OCI-LY7 (cell line): ENCODE measurements at regions of chr6 and their contacts with region 1.

Region 1: DNA sequence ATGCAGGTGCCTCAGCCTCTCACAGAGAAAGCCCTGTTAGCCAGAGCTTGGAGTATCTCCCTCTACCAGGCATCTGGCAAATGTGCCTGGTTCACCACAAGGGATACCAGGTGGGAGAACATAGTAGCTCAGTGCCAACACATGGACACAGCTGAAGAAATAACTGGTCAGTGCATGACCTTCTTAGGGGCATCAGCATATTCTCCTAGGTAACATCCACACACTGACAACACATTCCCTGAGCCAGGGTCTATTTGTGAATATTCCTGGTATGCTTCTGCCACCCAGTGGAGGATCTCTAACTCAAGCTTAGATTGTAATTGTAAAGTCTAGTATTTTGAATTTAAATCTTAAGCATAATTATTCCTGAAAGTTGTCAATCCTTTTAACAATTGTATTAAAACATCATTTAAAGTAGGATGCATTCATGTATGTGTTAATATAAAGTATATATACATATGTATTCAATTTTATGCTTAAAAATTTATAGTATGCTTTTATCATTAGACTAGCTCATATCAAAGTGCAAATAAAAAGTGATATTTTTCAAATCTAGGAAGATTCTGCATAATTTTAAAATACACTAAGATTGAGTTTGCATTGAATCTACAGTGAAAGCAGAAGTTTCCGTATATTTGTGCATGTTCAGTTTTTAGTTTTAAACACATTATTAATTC is 45.3 kb upstream of the COL21A1 start:
- DNase-seq: peak; percentile 7
- H3K4me3 ChIP-seq: no peak overlapping the region
- H3K27ac ChIP-seq: no peak overlapping the region
- H3K4me1 ChIP-seq: no peaks in the 10 kb centered on the region
- CTCF ChIP-seq: peak; percentile 58

Region 2: DNA sequence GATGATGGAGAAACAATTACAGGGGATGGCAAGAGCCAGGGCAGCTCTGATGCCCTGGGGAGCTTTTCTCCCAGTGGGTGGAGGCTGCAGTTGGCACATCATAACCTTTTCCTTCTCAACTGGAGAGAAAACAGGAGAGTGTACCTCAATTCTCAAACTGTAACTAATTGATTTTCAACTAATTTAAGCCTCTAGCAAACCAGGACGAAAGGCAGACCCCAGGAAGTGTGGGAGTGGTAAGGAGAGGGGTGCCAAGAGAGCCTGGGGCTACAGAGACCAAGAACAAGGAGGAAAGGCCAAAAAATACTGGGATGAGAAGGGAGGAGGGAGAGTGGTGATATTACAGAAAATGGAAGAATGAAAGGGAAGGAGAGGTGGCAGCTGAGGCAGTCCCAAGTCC is 422.9 kb before region 1 on chr6:
- CTCF ChIA-PET with region 1: no interaction called
- POLR2A ChIA-PET with region 1: no interaction called
- intact Hi-C with region 1: no loop called
- DNase-seq: no peak
- H3K4me3 ChIP-seq: no peak overlapping the region
- H3K27ac ChIP-seq: no peak overlapping the region
- H3K4me1 ChIP-seq: no peaks in the 10 kb centered on the region
- CTCF ChIP-seq: no peak

Region 3: DNA sequence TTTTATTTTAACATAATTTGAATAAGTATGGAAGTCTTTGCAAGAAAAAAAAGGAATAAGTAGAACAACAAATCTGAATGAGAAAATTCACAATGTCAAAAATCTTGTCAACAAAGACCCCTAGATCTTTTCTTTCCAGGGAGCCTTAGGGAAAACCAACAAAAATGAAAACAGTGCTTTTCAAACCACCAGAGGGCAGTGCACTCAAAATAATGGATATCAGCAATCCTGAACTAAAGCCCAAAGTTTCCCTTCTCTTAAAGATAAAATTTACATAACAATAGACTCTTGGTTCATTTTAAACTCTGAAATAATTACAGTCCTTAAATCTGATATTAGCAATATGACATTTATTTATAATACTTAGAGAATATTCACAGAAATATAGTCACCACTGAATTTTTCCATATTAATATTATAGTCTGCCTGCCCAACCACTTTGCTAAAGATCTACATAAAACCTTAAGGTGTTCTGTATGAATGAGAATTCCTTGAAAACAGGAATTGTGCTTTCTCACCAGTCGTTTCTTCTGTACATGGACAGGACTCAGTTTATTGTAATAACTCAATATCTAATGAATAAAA is 311.9 kb before region 1 on chr6:
- CTCF ChIA-PET with region 1: no interaction called
- POLR2A ChIA-PET with region 1: interaction called, 3 read pairs
- intact Hi-C with region 1: loop called (anchors 2 kb)
- DNase-seq: peak; percentile 22
- H3K4me3 ChIP-seq: no peak overlapping the region
- H3K27ac ChIP-seq: no peak overlapping the region
- H3K4me1 ChIP-seq: no peaks in the 10 kb centered on the region
- CTCF ChIP-seq: peak; percentile 92

Region 4: GRCh38 chr6:56050530-56051201 is 242.0 kb before region 1 on chr6:
- CTCF ChIA-PET with region 1: no interaction called
- POLR2A ChIA-PET with region 1: no interaction called
- intact Hi-C with region 1: no loop called
- DNase-seq: no peak
- H3K4me3 ChIP-seq: no peak overlapping the region
- H3K27ac ChIP-seq: no peak overlapping the region
- H3K4me1 ChIP-seq: no peaks in the 10 kb centered on the region
- CTCF ChIP-seq: no peak

Region 5: GRCh38 chr6:56595490-56596122 is 303.0 kb after region 1 on chr6:
- CTCF ChIA-PET with region 1: no interaction called
- POLR2A ChIA-PET with region 1: no interaction called
- intact Hi-C with region 1: no loop called
- DNase-seq: peak; percentile 73
- H3K4me3 ChIP-seq: no peak overlapping the region
- H3K27ac ChIP-seq: no peak overlapping the region
- H3K4me1 ChIP-seq: peaks cover 25% of the 10 kb centered on the region
- CTCF ChIP-seq: peak; percentile 83